Panc1 (cell line): ENCODE measurements at regions of chr2 and their contacts with region 1.

Region 1: DNA sequence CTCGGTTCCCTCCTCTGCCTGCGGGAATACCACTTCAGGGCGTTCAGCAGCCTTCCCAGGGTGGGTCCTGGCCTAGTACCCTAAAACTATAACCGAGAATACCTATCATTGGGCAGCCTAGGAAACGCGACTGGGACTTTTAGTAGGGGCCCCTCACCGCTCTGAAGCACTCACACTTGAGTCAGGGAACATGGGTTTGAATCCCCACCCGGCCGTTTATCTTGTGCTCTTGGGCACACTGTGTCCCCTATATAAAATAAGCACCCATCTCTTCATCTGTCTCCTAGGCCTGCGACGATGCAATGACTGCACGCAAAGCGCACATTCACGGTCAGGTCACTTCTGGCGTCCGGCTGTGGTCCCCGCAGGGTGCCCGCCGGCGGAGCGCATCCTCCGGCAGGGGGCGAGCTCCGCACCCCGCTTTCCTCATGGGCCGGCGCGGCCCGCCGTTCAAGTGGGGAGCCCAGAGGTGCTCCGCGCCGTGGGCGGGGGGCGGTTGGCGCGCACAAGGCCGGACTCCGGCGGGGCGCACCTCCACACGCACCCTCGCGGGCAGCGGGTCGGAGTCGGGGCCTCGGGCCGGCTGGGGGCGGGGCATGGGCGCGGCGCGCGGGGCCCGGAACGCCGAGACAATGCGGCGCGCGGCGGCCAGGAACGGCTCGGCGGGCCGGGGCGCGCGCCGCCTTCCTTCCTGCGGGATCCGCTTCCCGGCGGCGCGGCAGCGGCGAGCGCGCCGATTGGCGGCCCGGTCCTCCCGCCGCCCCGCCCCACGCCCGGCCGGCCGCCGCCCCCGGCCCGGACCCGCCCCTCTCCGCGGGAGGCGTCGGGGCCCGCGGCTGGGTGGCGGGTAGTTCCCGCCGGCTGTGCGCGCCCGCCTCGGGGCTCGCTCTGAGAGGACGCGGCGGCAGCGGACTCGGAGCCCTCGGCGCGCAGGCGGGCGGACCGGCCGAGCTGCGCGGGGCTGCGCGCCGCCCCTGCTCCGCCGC is at the start of gene ASAP2:
- DNase-seq: no peak
- ATAC-seq: peak; percentile 89
- H3K4me3 ChIP-seq: peak within 1 kb of the TSS; percentile 91 to 99
- H3K27ac ChIP-seq: peak within 1 kb of the TSS; percentile 97
- H3K4me1 ChIP-seq: peaks cover 22% of the 10 kb centered on the region
- H3K27me3 ChIP-seq: no peaks in the 10 kb centered on the region
- CTCF ChIP-seq: peak; percentile 91
- total RNA-seq, gene ASAP2: 107 TPM

Region 2: GRCh38 chr2:8821276-8822217 is 384.7 kb before region 1 on chr2:
- CTCF ChIA-PET with region 1: no interaction called
- POLR2A ChIA-PET with region 1: no interaction called
- in situ Hi-C with region 1: no loop called
- intact Hi-C with region 1: no loop called
- DNase-seq: no peak
- ATAC-seq: no peak
- H3K4me3 ChIP-seq: no peak overlapping the region
- H3K27ac ChIP-seq: no peak overlapping the region
- H3K4me1 ChIP-seq: no peaks in the 10 kb centered on the region
- H3K27me3 ChIP-seq: no peaks in the 10 kb centered on the region
- CTCF ChIP-seq: no peak

Region 3: DNA sequence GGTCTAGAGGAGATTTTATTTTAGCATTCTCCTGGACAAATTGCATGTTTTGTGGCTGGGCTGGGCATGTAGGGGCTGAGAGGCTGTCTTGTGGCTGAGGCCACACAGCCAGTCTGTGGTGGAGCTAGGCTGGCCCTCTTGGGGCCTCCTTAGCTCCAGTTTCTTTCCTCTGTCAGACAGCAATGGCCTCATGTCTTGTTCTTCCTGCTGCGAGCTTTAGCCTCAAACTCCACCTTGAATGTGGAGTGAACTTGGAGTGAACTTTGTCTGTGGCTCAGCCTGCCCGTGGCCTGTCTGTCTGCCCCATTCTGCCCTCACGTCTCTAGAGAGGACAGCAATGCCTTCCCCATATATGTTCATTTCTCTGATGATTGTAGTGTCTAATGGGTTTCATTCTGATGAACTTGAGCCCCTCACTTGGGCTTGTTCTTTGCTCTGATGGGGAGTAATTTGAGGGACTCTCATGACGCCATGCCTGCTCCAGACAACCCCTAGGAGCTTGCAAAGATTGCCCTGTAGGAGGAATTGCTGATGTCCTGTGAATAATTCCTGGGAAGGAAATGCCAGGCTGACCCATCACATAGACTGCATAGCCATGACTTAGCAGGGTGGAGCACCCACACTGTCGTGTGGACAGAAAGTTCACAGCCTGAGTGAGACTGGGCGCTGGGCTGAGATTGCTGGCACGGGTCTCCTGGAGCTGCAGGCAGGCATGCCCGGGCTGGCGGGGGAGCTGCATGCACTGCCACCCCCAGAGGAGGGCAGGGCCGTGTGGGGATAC is 43.0 kb after region 1 on chr2:
- CTCF ChIA-PET with region 1: no interaction called
- POLR2A ChIA-PET with region 1: interaction called, 10 read pairs
- in situ Hi-C with region 1: no loop called
- intact Hi-C with region 1: no loop called
- DNase-seq: no peak
- ATAC-seq: peak; percentile 18
- H3K4me3 ChIP-seq: peak overlapping the region in 1 of 2 experiments; percentile 28; a peak in 2 of 4 replicates
- H3K27ac ChIP-seq: peak overlapping the region; percentile 100
- H3K4me1 ChIP-seq: peaks cover 87% of the 10 kb centered on the region
- H3K27me3 ChIP-seq: no peaks in the 10 kb centered on the region
- CTCF ChIP-seq: no peak